ENCODE measurements at regions of chr3 and their contacts with region 1.

Region 1: GRCh38 chr3:194671900-194672808 is at the start of gene LSG1:
- DNase-seq: peak; percentile 68 to 92 (median 87)
- ATAC-seq: peak; percentile 98
- H3K4me3 ChIP-seq: peak within 1 kb of the TSS; percentile 96
- H3K4me3 Mint-ChIP-seq: peak within 1 kb of the TSS; percentile 95 to 100 (median 98)
- H3K27ac ChIP-seq: peak within 1 kb of the TSS; percentile 90
- H3K27ac Mint-ChIP-seq: peak within 1 kb of the TSS; percentile 96 to 99 (median 98)
- H3K4me1 ChIP-seq: peaks cover 11 to 19% of the 10 kb centered on the region in 2 donors
- H3K4me1 Mint-ChIP-seq: peaks cover 21 to 52% (median 38%) of the 10 kb centered on the region in 7 donors
- H3K27me3 ChIP-seq: no peaks in the 10 kb centered on the region
- H3K27me3 Mint-ChIP-seq: no peaks in the 10 kb centered on the region
- total RNA-seq, gene LSG1: 33.5 to 59.2 (median 54.9) TPM

Region 2: GRCh38 chr3:194486540-194487288 is 185.4 kb before region 1 on chr3 and contains the start of gene ATP13A3:
- CTCF ChIA-PET with region 1: no interaction called
- POLR2A ChIA-PET with region 1: interaction called, 5 read pairs
- intact Hi-C with region 1: loop called (anchors 1 to 2 kb)
- DNase-seq: peak; percentile 84 to 93 (median 91)
- ATAC-seq: peak; percentile 93
- H3K4me3 ChIP-seq: peak within 1 kb of the TSS; percentile 83
- H3K4me3 Mint-ChIP-seq: peak within 1 kb of the TSS; percentile 83 to 98 (median 93)
- H3K27ac ChIP-seq: peak within 1 kb of the TSS; percentile 82
- H3K27ac Mint-ChIP-seq: peak within 1 kb of the TSS; percentile 82 to 96 (median 94)
- H3K4me1 ChIP-seq: peaks cover 20 to 25% of the 10 kb centered on the region in 2 donors
- H3K4me1 Mint-ChIP-seq: peaks cover 41 to 60% (median 45%) of the 10 kb centered on the region in 7 donors
- H3K27me3 ChIP-seq: no peaks in the 10 kb centered on the region
- H3K27me3 Mint-ChIP-seq: no peaks in the 10 kb centered on the region
- total RNA-seq, gene ATP13A3: 46.5 to 81.8 (median 58.4) TPM

Region 3: GRCh38 chr3:194632809-194633348 is 39.3 kb before region 1 on chr3:
- CTCF ChIA-PET with region 1: no interaction called
- POLR2A ChIA-PET with region 1: interaction called, 3 read pairs
- intact Hi-C with region 1: loop called in 1 of 2 experiments (anchors 1 kb)
- DNase-seq: no peak
- ATAC-seq: peak; percentile 59
- H3K4me3 ChIP-seq: peak overlapping the region; percentile 45
- H3K4me3 Mint-ChIP-seq: peak overlapping the region; percentile 67 to 91 (median 84)
- H3K27ac ChIP-seq: peak overlapping the region; percentile 60
- H3K27ac Mint-ChIP-seq: peak overlapping the region in 2 of 9 donors; percentile 14 to 54
- H3K4me1 ChIP-seq: no peaks in the 10 kb centered on the region
- H3K4me1 Mint-ChIP-seq: peaks cover 0 to 21% (median 8%) of the 10 kb centered on the region in 7 donors
- H3K27me3 ChIP-seq: no peaks in the 10 kb centered on the region
- H3K27me3 Mint-ChIP-seq: no peaks in the 10 kb centered on the region

Region 4: DNA sequence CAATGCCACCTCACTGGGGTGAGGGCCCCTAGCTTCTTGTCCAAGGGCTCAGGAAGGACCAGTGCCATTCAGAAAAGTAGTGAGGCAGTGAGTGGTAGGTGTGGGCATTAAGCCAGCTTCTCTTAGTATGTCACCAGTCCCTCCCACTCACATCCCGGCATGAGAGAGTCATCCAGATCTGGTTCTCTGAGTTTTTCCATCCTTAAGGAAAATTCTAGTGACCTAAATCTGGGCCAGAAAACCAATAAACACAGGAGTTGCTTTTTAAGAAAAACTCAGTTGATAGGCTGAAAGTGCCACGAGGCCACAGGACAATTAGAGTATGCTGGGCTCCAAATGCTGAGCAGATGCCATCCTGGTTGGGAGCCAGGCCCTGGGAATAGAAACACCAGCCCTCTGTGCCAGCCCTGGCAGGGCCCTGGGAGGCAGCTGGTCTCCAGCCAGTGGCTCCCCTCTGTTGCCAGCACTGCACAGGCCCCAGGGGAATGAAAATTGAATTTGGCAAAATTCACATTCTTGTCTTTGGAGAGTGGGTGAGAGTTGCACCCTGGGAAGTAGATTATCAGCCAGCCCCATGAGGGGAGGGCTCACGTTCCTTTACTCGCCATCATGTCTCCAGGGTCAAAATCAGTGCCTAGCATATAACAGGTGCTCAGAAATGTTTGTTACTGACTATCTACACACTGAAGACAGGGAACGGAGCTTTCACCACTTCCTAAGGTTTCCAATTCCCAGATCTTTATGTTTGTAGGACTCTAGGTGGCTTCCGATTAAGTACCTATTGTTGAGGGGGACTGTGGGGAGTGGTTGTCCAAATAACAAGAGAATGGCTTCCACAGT is 66.3 kb after region 1 on chr3:
- CTCF ChIA-PET with region 1: no interaction called
- POLR2A ChIA-PET with region 1: no interaction called
- intact Hi-C with region 1: no loop called
- DNase-seq: no peak
- ATAC-seq: no peak
- H3K4me3 ChIP-seq: no peak overlapping the region
- H3K4me3 Mint-ChIP-seq: no peak overlapping the region
- H3K27ac ChIP-seq: no peak overlapping the region
- H3K27ac Mint-ChIP-seq: peak overlapping the region in 1 of 9 donors; percentile 84
- H3K4me1 ChIP-seq: peaks cover 0 to 8% of the 10 kb centered on the region in 2 donors
- H3K4me1 Mint-ChIP-seq: no peaks in the 10 kb centered on the region
- H3K27me3 ChIP-seq: peaks cover 0 to 3% of the 10 kb centered on the region in 2 donors
- H3K27me3 Mint-ChIP-seq: peaks cover 7 to 16% (median 9%) of the 10 kb centered on the region in 5 donors

Region 5: GRCh38 chr3:194769020-194769643 is 97.0 kb after region 1 on chr3:
- CTCF ChIA-PET with region 1: interaction called, 5 read pairs
- POLR2A ChIA-PET with region 1: interaction called, 10 read pairs
- intact Hi-C with region 1: loop called (anchors 1 kb)
- DNase-seq: peak; percentile 59 to 98 (median 93)
- ATAC-seq: peak; percentile 99
- H3K4me3 ChIP-seq: peak overlapping the region; percentile 70
- H3K4me3 Mint-ChIP-seq: peak overlapping the region; percentile 77 to 95 (median 88)
- H3K27ac ChIP-seq: peak overlapping the region; percentile 78
- H3K27ac Mint-ChIP-seq: peak overlapping the region; percentile 57 to 98 (median 94)
- H3K4me1 ChIP-seq: peaks cover 6 to 9% of the 10 kb centered on the region in 2 donors
- H3K4me1 Mint-ChIP-seq: peaks cover 8 to 35% (median 23%) of the 10 kb centered on the region in 7 donors
- H3K27me3 ChIP-seq: no peaks in the 10 kb centered on the region
- H3K27me3 Mint-ChIP-seq: peaks cover 0 to 23% (median 7%) of the 10 kb centered on the region in 5 donors

Region 6: GRCh38 chr3:195106418-195106906 is 434.3 kb after region 1 on chr3:
- CTCF ChIA-PET with region 1: interaction called, 8 read pairs
- POLR2A ChIA-PET with region 1: no interaction called
- intact Hi-C with region 1: loop called (anchors 1 kb)
- DNase-seq: peak; percentile 44 to 82 (median 70)
- ATAC-seq: peak; percentile 89
- H3K4me3 ChIP-seq: no peak overlapping the region
- H3K4me3 Mint-ChIP-seq: peak overlapping the region; percentile 10 to 71 (median 62)
- H3K27ac ChIP-seq: no peak overlapping the region
- H3K27ac Mint-ChIP-seq: peak overlapping the region in 1 of 9 donors; percentile 43
- H3K4me1 ChIP-seq: no peaks in the 10 kb centered on the region
- H3K4me1 Mint-ChIP-seq: peaks cover 5 to 10% (median 6%) of the 10 kb centered on the region in 7 donors
- H3K27me3 ChIP-seq: no peaks in the 10 kb centered on the region
- H3K27me3 Mint-ChIP-seq: no peaks in the 10 kb centered on the region

Region 7: GRCh38 chr3:195542698-195543499 is 870.7 kb after region 1 on chr3 and contains the start of gene PPP1R2:
- CTCF ChIA-PET with region 1: no interaction called
- POLR2A ChIA-PET with region 1: interaction called, 4 read pairs
- intact Hi-C with region 1: loop called (anchors 5 kb)
- DNase-seq: peak; percentile 86 to 97 (median 93)
- ATAC-seq: peak; percentile 94
- H3K4me3 ChIP-seq: peak within 1 kb of the TSS; percentile 63
- H3K4me3 Mint-ChIP-seq: peak within 1 kb of the TSS; percentile 89 to 98 (median 93)
- H3K27ac ChIP-seq: peak within 1 kb of the TSS; percentile 98
- H3K27ac Mint-ChIP-seq: peak within 1 kb of the TSS; percentile 92 to 99 (median 97)
- H3K4me1 ChIP-seq: peaks cover 37 to 66% of the 10 kb centered on the region in 2 donors
- H3K4me1 Mint-ChIP-seq: peaks cover 48 to 77% (median 73%) of the 10 kb centered on the region in 7 donors
- H3K27me3 ChIP-seq: no peaks in the 10 kb centered on the region
- H3K27me3 Mint-ChIP-seq: no peaks in the 10 kb centered on the region
- total RNA-seq, gene PPP1R2: 76.1 to 160 (median 150) TPM

Measured in naive thymus-derived CD4-positive, alpha-beta T cell (primary cell).